ENCODE measurements at regions of chr5 and their contacts with region 1.

Region 1: GRCh38 chr5:179821581-179822432 is 1.1 kb downstream of the SQSTM1 start:
- DNase-seq: peak; percentile 76 to 94 (median 90)
- H3K4me3 ChIP-seq: peak overlapping the region; percentile 77 to 100 (median 98)
- H3K27ac ChIP-seq: peak overlapping the region; percentile 93 to 100 (median 99)
- H3K27me3 ChIP-seq: no peaks in the 10 kb centered on the region
- CTCF ChIP-seq: peak in 20 of 56 donors; percentile 5 to 30 (median 18)

Region 2: DNA sequence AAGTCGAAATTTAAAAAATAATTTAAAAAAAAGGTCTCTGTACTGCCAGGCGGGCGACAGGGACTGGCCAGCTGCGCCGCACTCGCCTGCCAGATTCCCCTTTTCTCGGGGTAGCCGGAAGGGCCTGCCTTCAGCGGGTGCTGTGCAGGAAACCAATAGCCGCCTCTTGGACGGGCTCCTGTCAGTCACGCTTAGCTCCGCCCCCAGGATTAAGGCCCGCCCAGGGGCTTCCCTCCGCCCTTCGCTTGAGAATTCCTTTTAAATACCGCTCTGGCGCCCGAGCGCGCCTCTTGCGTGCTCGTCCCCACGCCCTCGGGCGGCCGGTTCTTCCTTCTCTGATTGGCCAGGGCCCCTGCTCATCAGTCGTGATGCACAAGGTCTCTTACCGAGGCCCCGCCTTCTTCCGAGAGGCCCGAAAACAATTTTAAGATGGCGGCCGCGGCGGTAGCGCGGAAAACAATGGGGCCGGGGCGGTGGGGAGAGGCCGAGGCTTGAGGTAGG is 89.3 kb before region 1 on chr5 and contains the start of gene MAML1:
- intact Hi-C with region 1: loop called in 1 of 2 experiments (anchors 2 kb)
- DNase-seq: peak; percentile 100
- H3K4me3 ChIP-seq: peak within 1 kb of the TSS; percentile 54 to 97 (median 81)
- H3K27ac ChIP-seq: peak within 1 kb of the TSS; percentile 60 to 99 (median 93)
- H3K27me3 ChIP-seq: no peaks in the 10 kb centered on the region
- CTCF ChIP-seq: peak in 27 of 56 donors; percentile 0 to 53 (median 29)
- total RNA-seq, gene MAML1: 17.4 to 42.6 (median 27.4) TPM

Region 3: DNA sequence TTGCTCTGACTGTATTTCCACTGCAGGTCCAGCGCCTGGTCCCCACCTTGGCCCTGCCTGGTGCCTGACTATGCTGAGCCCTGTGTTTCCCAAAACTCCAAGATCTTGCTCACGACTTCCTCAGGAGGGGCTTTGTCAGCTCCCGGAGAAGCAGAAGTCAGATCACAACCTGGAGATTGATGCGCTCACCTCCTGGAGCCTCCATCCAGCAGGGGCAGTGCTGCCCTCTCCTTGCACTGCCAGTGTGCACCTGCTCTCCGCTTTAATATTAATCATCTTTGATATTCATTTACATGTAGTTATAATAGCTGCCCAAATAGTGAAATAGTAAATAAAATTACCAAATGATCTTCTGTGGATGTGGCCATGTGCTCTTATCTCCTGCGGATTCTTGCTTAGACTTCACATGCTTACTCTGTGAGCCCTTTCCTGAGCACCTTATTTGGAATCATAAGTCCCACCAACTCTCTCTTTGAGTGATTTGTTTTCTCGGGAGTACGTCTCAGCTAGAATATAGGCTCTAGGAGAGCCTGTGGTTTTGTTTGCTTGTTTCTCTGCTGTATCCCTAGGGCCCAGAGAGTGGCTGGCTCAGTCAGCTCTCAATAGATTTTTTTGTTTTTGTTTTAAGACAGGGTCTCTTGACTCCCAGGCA is 71.8 kb before region 1 on chr5:
- intact Hi-C with region 1: no loop called
- DNase-seq: no peak
- H3K4me3 ChIP-seq: no peak overlapping the region
- H3K27ac ChIP-seq: no peak overlapping the region
- H3K27me3 ChIP-seq: no peaks in the 10 kb centered on the region
- CTCF ChIP-seq: no peak

Region 4: DNA sequence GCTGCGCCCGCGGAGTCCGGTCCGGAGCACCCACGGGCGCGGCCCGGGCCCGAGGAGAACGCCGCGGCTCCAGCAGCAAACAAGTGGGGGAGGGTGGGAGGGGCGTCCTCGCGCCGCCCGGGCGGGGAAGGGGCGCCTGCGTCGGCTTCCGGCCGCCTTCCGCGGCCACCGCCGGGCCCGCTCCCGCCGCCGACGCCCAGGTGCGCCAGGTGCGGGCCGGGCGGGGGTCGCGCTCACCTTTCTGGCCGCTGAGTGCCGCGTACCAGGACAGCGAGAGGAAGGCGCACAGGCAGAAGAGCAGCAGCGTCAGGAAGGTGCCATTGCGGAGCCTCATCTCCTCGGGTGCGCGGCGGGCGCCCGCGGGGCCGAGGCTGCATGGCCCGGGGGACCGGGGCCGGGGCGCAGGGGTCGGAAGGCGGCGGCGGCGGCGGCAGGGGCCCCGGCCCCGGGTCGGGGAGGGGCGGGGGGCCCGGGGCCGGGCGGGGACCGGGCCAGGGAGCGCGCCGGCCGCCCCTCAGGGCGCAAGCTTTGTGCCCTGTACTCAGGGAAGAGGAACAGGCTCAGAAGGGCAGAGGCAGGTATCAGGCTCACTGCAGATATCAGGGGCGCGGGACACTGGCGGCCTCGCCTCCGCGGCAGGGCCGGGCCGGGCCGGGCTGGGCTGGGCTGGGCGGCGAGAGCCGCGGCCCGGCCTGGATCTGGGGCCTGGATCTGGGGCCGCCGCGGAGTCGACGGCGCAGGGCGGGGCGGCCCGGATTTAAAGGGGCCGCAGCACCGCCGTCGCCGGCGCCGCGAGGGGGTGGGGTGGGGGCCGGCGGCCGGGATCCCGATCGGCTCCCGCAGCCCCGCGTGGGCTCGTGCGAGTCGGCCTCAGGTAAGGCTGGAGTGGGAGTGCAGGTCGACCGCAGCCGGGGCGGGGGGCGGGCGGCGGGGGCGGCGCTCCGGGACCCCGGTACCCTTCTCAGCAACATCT is 15.3 kb before region 1 on chr5 and contains the start of gene MGAT4B:
- intact Hi-C with region 1: loop called (anchors 1 to 2 kb)
- DNase-seq: peak in 5 of 10 donors; percentile 54 to 87 (median 76)
- H3K4me3 ChIP-seq: peak within 1 kb of the TSS; percentile 70 to 98 (median 91)
- H3K27ac ChIP-seq: peak within 1 kb of the TSS; percentile 80 to 98 (median 94)
- H3K27me3 ChIP-seq: no peaks in the 10 kb centered on the region
- CTCF ChIP-seq: peak in 3 of 56 donors; percentile 4 to 24 (median 19)
- total RNA-seq, gene MGAT4B: 46.9 to 108 (median 65.7) TPM

Region 5: DNA sequence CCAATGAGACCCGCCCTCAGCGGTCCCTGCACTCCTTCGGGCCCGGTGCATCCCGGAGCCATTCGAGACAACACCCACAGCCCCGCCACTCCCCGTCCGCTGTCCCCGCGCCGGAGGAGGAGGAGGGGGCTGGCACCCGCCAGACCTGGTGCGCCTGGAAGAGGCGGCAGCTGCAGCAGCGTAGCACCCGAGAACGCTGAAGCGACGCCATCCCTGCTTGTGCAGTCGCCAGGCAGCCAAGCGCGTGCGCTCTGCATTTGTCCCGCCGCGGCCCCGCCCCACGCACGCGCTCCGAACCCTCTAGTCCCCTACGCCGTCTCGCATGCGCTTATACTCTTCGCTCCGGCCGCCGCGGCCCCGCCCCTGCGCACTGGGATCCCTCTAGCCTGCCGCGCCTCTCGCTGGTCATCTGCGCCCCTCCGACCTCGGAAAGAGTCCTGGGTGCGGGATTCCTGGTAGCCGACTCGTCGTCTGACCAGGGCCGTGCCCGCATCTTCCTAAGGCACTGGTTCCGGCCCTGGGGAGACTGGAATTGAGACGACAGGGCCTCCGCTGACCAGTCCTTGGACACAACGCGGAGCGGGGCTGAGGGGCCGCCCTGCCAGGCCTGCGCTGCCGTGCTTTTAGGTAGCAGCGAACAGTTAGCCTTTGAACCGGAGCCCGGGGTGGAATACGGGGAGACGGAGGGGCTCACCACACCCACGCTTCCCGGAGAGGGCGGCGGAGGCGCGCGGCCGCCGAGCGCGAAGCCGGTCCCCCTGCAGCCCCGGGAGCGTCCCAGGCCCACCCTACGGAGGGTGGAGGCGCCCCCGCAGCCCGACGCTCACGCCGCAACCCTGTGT is 37.0 kb after region 1 on chr5 and contains the start of gene MRNIP:
- intact Hi-C with region 1: loop called (anchors 2 kb)
- DNase-seq: peak; percentile 94 to 99 (median 98)
- H3K4me3 ChIP-seq: peak within 1 kb of the TSS; percentile 61 to 100 (median 95)
- H3K27ac ChIP-seq: peak within 1 kb of the TSS; percentile 79 to 97 (median 91)
- H3K27me3 ChIP-seq: no peaks in the 10 kb centered on the region
- CTCF ChIP-seq: peak in 49 of 56 donors; percentile 23 to 73 (median 49)
- total RNA-seq, gene MRNIP: 44.7 to 119 (median 74.4) TPM

Region 6: DNA sequence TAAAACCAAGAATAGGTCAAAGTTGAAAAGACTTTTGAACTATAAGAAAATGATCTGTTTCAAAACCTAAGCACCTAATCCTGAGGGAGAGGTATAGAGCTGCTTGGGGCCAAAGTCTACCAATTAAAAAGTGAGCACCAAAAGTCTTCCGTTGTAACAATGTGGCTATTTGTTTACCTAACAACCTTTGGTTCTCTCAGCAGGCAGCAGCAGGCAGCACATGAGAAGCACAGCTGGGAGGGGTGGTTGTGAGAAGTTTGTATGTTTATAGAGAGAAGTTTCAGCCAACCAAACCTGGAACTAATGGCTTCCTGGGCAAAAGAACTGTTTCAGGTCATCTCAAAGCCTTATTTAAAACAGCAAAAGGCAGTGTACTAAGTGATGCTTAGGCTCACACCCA is 145.7 kb after region 1 on chr5:
- intact Hi-C with region 1: no loop called
- DNase-seq: no peak
- H3K4me3 ChIP-seq: no peak overlapping the region
- H3K27ac ChIP-seq: peak overlapping the region in 10 of 59 donors; percentile 3 to 48 (median 14)
- H3K27me3 ChIP-seq: no peaks in the 10 kb centered on the region
- CTCF ChIP-seq: no peak

Region 7: GRCh38 chr5:179994583-179995323 is 172.9 kb after region 1 on chr5:
- intact Hi-C with region 1: no loop called
- DNase-seq: no peak
- H3K4me3 ChIP-seq: no peak overlapping the region
- H3K27ac ChIP-seq: no peak overlapping the region
- H3K27me3 ChIP-seq: no peaks in the 10 kb centered on the region
- CTCF ChIP-seq: no peak

Measured in dorsolateral prefrontal cortex (tissue), 120 donors.